Activated CD4-positive, alpha-beta memory T cell treated with anti-CD3 and anti-CD28 coated beads, Interleukin-2, amount 10 ng/mL, durations not matched to agents 7 days and 5 days (primary cell): ENCODE measurements at regions of chr7 and their contacts with region 1.

Region 1: GRCh38 chr7:142478479-142479072 is 220.7 kb upstream of the PRSS58 start:
- DNase-seq: peak; percentile 42
- H3K4me3 Mint-ChIP-seq: no peak overlapping the region
- H3K27ac Mint-ChIP-seq: no peak overlapping the region
- H3K4me1 Mint-ChIP-seq: peaks cover 45% of the 10 kb centered on the region
- H3K27me3 Mint-ChIP-seq: no peaks in the 10 kb centered on the region

Region 2: GRCh38 chr7:142375666-142376313 is 102.8 kb before region 1 on chr7:
- CTCF ChIA-PET with region 1: no interaction called
- POLR2A ChIA-PET with region 1: no interaction called
- DNase-seq: no peak
- H3K4me3 Mint-ChIP-seq: no peak overlapping the region
- H3K27ac Mint-ChIP-seq: peak overlapping the region; percentile 36
- H3K4me1 Mint-ChIP-seq: peaks cover 2% of the 10 kb centered on the region
- H3K27me3 Mint-ChIP-seq: peaks cover 14% of the 10 kb centered on the region

Region 3: GRCh38 chr7:142412551-142413193 is 65.9 kb before region 1 on chr7:
- CTCF ChIA-PET with region 1: interaction called, 11 read pairs
- POLR2A ChIA-PET with region 1: no interaction called
- DNase-seq: peak; percentile 45
- H3K4me3 Mint-ChIP-seq: no peak overlapping the region
- H3K27ac Mint-ChIP-seq: no peak overlapping the region
- H3K4me1 Mint-ChIP-seq: peaks cover 3% of the 10 kb centered on the region
- H3K27me3 Mint-ChIP-seq: peaks cover 3% of the 10 kb centered on the region

Region 4: DNA sequence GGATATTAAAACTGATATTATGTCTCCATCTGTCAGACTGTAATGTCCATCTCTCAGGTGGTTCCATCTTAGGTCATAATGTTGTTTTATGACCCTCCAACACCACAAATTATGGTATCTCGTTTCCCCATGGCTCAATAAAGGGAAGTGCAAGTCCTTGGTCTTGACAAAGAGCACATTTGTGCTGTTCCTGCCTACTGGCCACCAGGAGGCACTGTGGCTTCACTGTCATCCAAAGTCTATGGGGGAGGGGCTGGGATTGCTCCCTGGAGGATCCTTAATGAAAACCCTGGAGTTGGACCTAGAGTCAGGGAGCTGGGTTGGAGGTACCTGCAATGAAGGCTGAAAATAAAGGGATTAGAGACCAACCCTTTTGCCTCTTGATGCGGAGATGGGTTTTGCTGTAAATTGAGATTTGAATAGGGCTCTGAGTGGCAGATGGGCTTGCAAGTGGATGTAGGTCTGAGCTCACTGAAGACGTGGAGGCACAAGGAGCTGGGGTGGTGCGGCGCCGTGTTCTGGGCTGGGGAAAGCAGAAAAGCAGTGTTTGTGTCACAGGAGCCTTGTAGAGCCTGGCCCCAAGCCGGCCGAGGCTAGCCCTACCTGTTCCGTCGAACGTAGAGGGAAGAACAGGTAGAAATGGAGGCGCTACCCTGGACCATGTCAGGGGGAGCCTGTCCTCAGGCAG is 40.2 kb before region 1 on chr7:
- CTCF ChIA-PET with region 1: interaction called, 17 read pairs
- POLR2A ChIA-PET with region 1: no interaction called
- DNase-seq: peak; percentile 43
- H3K4me3 Mint-ChIP-seq: no peak overlapping the region
- H3K27ac Mint-ChIP-seq: no peak overlapping the region
- H3K4me1 Mint-ChIP-seq: peaks cover 66% of the 10 kb centered on the region
- H3K27me3 Mint-ChIP-seq: no peaks in the 10 kb centered on the region

Region 5: DNA sequence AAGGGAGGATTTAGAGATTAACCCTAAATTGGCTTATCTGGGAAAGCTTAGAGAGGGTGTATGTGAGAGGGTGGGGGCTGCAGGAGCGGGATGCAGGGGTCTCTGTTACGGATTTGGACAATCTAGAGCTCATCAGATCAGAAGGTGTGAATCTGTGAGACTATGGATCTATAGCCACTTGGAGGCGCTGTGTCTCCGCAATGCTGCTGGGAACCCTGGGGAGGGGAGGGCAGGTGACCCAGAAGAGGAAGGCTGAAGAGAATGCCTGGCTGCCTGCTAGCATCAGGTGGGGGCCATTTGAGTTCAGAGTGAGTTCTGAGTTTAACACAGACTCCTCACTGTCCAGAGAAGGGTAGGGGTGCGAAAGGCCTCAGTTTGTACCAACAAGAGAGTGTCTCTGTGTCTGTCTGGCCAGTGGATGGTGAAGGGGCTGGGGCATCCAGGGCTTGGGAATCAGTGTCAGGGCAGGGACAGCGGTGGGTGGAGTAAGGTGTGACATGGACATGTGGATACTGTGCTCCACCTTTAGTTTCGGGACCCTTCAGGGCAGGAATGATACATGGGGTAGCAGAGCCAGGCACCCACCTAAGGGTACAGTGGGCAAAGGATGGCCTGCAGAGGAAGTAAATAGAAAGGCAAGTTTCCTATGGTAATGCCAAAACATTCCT is 33.4 kb before region 1 on chr7:
- CTCF ChIA-PET with region 1: interaction called, 17 read pairs
- POLR2A ChIA-PET with region 1: no interaction called
- DNase-seq: peak; percentile 48
- H3K4me3 Mint-ChIP-seq: no peak overlapping the region
- H3K27ac Mint-ChIP-seq: no peak overlapping the region
- H3K4me1 Mint-ChIP-seq: peaks cover 37% of the 10 kb centered on the region
- H3K27me3 Mint-ChIP-seq: peaks cover 8% of the 10 kb centered on the region

Region 6: GRCh38 chr7:142459551-142459963 is 19.0 kb before region 1 on chr7:
- CTCF ChIA-PET with region 1: interaction called, 355 read pairs
- POLR2A ChIA-PET with region 1: interaction called, 24 read pairs
- DNase-seq: peak; percentile 37
- H3K4me3 Mint-ChIP-seq: no peak overlapping the region
- H3K27ac Mint-ChIP-seq: no peak overlapping the region
- H3K4me1 Mint-ChIP-seq: peaks cover 50% of the 10 kb centered on the region
- H3K27me3 Mint-ChIP-seq: peaks cover 6% of the 10 kb centered on the region

Region 7: DNA sequence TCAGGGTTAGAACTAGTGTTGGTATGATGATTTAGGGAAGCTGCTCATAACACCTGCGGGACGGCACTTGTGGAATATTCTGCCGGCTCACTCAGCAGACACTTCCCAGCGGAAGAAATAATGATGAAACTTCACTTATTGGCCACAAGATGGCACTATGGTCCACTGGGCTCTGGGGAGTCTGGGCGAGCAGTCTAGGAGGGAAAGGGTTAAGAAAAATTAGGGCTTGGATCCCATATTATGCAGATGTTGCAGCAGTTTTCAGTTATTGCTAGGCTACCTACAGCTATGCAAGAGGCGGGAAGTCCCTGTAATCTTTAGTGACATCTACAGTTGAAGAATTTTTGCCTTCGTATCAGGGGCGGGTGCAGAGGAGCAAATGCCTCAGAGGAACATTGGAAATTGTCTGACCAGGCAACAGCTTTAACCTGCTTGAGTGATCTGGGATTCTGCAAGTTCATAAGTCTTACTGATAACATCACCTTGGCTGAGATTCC is 18.0 kb after region 1 on chr7:
- CTCF ChIA-PET with region 1: interaction called, 38 read pairs
- POLR2A ChIA-PET with region 1: no interaction called
- DNase-seq: no peak
- H3K4me3 Mint-ChIP-seq: no peak overlapping the region
- H3K27ac Mint-ChIP-seq: no peak overlapping the region
- H3K4me1 Mint-ChIP-seq: peaks cover 29% of the 10 kb centered on the region
- H3K27me3 Mint-ChIP-seq: no peaks in the 10 kb centered on the region

Region 8: GRCh38 chr7:142598297-142598696 is 119.7 kb after region 1 on chr7:
- CTCF ChIA-PET with region 1: no interaction called
- POLR2A ChIA-PET with region 1: no interaction called
- DNase-seq: no peak
- H3K4me3 Mint-ChIP-seq: no peak overlapping the region
- H3K27ac Mint-ChIP-seq: no peak overlapping the region
- H3K4me1 Mint-ChIP-seq: no peaks in the 10 kb centered on the region
- H3K27me3 Mint-ChIP-seq: peaks cover 14% of the 10 kb centered on the region